A673 (cell line): ENCODE measurements at regions of chr15 and their contacts with region 1.

Region 1: GRCh38 chr15:64731012-64731806 is 44.2 kb downstream of the RBPMS2 start:
- DNase-seq: peak; percentile 77
- H3K4me3 ChIP-seq: no peak overlapping the region
- H3K27ac ChIP-seq: no peak overlapping the region
- H3K4me1 ChIP-seq: no peaks in the 10 kb centered on the region
- H3K27me3 ChIP-seq: no peaks in the 10 kb centered on the region
- CTCF ChIP-seq: peak; percentile 92

Region 2: DNA sequence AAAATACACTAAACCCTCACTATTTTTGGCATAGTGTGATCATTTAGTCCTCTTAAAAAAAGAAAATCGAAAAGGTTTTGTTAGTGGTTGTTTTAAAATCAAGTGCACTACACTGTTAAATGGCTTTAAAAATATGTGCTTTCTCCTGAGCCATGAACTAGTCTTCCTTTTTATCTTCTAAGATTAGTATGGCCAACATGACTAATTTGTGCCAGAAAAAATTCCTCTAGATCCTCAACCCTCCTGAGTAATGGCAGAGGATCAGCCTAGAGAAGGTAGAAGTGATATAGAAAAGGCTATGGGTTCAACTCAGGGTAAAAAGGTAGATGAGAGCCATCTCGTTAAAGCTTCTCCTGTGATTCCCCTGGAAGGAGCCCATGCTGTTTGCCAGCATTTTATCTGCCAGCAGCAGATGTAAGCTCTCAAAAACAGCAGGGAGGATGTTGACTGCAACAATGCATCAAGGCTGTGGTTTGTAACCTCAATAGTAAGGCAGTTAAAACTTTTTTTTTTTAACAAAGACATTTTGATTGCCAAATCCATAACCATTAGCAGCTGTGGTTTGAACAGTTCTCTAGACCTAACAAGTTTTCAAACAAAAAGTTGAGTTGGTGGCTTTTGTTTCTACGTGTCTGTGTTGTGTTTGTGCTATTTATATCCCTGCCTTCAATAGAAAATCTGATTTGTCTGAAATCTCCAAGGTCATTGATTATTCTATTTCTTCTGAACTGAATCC is 301.0 kb before region 1 on chr15:
- CTCF ChIA-PET with region 1: no interaction called
- POLR2A ChIA-PET with region 1: no interaction called
- intact Hi-C with region 1: loop called (anchors 2 kb)
- DNase-seq: peak; percentile 93
- H3K4me3 ChIP-seq: no peak overlapping the region
- H3K27ac ChIP-seq: peak overlapping the region; percentile 1
- H3K4me1 ChIP-seq: peaks cover 20% of the 10 kb centered on the region
- H3K27me3 ChIP-seq: no peaks in the 10 kb centered on the region
- CTCF ChIP-seq: no peak

Region 3: GRCh38 chr15:64702816-64703646 is 28.2 kb before region 1 on chr15:
- CTCF ChIA-PET with region 1: interaction called, 16 read pairs
- POLR2A ChIA-PET with region 1: no interaction called
- intact Hi-C with region 1: no loop called
- DNase-seq: peak; percentile 95
- H3K4me3 ChIP-seq: peak overlapping the region; percentile 71
- H3K27ac ChIP-seq: peak overlapping the region; percentile 76
- H3K4me1 ChIP-seq: peaks cover 37% of the 10 kb centered on the region
- H3K27me3 ChIP-seq: no peaks in the 10 kb centered on the region
- CTCF ChIP-seq: 0 out of 2 replicates have a peak, but pooled peaks have one; percentile 8

Region 4: DNA sequence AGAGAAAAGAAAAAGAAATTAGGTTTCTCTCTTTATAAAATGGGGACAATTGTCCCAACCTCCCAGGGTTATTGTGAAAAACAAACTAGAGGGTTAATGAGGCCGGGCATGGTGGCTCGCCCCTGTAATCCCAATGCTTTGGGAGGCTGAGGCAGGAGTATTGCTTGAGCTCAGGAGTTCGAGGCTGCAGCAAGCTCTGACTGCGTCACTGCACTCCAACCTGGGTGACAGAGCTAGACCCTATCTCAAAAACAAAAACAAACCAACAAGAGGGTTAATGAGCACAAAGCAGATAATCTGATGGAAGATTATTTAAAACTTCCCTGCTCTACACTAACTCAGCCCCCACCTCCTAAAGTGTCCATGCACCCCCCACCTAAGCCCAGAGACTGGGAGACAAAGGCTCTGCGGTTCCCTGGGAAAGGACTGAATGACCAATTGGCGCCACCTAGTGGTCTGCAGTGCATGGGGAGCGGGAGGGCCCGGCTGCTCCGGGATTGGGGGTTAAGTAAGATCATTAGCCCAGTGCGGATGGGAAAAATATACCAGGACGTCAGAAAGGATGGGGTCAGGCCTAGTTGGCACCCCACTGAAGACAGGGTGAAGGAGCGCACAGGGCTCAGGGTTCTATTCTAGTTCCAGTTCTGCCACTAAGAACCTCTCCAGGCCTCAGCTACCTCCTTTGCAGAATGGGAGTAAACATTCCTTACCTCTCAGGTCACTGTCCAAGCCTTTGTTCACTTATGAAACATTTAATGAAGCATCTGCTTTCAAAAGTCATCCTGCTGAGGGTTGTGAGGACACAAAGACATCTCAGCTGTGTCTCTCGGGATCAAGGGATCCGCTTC is 78.7 kb after region 1 on chr15:
- CTCF ChIA-PET with region 1: interaction called, 11 read pairs
- POLR2A ChIA-PET with region 1: no interaction called
- intact Hi-C with region 1: loop called (anchors 1 kb)
- DNase-seq: peak; percentile 82
- H3K4me3 ChIP-seq: no peak overlapping the region
- H3K27ac ChIP-seq: no peak overlapping the region
- H3K4me1 ChIP-seq: no peaks in the 10 kb centered on the region
- H3K27me3 ChIP-seq: no peaks in the 10 kb centered on the region
- CTCF ChIP-seq: peak; percentile 98

Region 5: GRCh38 chr15:65028921-65029735 is 297.9 kb after region 1 on chr15 and contains the start of gene MTFMT:
- CTCF ChIA-PET with region 1: interaction called, 3 read pairs
- POLR2A ChIA-PET with region 1: no interaction called
- intact Hi-C with region 1: loop called (anchors 10 kb)
- DNase-seq: peak; percentile 93
- H3K4me3 ChIP-seq: peak within 1 kb of the TSS; percentile 75
- H3K27ac ChIP-seq: peak within 1 kb of the TSS; percentile 86
- H3K4me1 ChIP-seq: peaks cover 10% of the 10 kb centered on the region
- H3K27me3 ChIP-seq: no peaks in the 10 kb centered on the region
- CTCF ChIP-seq: no peak
- total RNA-seq, gene MTFMT: 26.2 and 32.1 TPM in 2 replicates

Region 6: DNA sequence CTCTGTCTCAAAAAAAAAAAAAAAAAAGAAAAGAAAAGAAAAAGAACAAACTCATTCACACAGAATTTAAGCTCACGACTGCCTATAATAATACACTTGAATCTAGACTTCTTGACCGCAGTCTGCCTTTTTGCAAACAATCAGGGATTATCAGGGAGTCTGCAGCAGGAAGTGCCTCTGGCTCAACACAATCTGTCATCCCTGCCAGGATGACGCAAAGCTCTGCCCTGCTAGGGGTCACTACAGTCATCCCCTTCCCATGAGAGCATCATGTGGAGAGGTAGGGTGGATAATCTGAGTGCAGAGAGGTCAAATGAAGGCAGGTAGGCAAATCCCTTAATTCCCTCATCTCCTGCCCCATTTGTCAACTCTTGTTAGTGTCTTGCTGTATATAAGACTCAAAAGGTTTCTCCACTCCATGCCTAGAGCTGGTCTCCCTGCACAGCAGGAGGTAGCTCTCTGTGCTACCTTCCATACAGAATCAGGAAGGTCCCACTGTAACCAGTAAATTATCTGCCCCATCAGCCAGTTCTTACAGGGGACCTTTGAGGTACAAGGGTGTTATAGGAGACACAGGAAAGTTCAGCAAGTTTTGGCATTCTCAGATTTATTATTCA is 379.6 kb after region 1 on chr15:
- CTCF ChIA-PET with region 1: no interaction called
- POLR2A ChIA-PET with region 1: no interaction called
- intact Hi-C with region 1: no loop called
- DNase-seq: no peak
- H3K4me3 ChIP-seq: no peak overlapping the region
- H3K27ac ChIP-seq: no peak overlapping the region
- H3K4me1 ChIP-seq: no peaks in the 10 kb centered on the region
- H3K27me3 ChIP-seq: no peaks in the 10 kb centered on the region
- CTCF ChIP-seq: no peak